Activated CD8-positive, alpha-beta memory T cell treated with anti-CD3 and anti-CD28 coated beads, Interleukin-2, amount 10 ng/mL, durations not matched to agents 7 days and 5 days (primary cell): ENCODE measurements at regions of chr5 and their contacts with region 1.

Region 1: DNA sequence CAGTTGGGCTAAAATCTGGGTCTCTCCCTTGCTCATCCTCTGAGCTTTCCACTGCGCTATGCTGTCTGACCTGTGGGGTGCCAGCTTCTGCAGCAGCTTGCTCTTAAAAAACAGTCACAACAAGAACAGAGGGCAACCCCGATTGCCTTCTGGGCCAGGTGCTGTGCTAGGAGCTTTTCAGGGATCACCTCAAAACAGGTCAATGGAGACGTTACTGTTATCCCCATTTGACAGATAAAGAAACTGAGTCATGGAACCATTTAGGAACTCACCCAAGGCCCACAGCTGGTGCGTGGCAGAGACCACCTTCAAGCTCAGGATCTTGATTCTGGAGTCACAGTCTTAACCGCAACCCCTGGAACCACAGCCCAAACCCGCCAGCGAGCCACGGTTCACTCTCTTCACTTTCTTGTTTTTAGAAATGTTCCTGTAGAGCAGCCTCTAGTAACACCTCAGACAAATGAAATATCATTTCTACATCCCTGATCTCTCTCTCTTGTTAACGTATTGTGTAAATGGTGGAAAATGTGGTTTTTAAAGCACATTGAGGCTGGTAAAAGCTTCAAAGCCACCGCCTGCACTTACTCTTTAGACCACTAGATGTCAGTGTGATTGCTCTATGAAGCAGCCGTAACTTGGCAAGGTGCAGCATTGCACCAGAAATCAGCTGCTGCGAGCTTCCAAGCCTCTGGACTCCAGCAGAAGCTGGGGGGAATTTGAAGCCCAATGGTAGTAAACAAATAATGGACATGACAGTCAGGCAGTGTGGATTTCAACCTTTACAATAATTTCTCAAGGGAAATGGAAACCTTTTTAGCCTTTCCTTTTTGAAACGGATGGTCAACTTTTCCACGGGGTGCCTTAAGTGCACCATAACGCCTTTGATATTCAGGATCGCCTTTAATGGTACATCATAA is 1.7 kb downstream of the FYB1 start:
- DNase-seq: peak; percentile 89
- ATAC-seq: peak; percentile 72
- H3K4me3 Mint-ChIP-seq: peak overlapping the region; percentile 81
- H3K27ac Mint-ChIP-seq: peak overlapping the region; percentile 96
- H3K4me1 Mint-ChIP-seq: peaks cover 64% of the 10 kb centered on the region
- H3K27me3 Mint-ChIP-seq: no peaks in the 10 kb centered on the region

Region 2: DNA sequence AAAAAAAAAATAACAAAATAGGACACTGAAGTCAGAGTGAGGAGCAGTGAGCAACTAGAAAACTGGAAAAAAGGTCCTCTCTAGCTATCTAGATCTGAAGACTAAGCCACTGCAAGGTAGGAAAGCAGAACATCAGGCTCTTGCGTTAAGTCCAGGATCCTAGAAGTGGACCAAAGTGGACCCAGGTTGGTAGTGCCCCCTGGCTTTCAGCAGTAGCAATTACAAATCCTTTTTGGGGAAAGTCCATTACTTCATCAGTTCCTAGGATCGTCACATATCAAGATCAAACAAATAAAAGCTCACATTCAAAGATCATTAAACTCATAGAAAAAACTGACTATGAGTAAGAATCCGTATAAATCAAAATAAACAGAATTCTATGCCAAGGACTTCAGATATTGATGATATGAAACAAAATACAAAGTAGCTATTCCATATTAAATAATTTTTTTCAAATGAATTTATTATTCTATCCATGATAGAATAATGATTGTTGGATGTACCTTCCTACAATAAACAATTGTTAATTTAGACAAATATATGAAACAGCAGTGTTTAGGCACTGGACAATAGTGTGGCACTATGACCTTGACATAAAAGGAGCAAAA is 136.9 kb before region 1 on chr5:
- CTCF ChIA-PET with region 1: interaction called, 10 read pairs
- DNase-seq: peak; percentile 56
- ATAC-seq: peak; percentile 46
- H3K4me3 Mint-ChIP-seq: no peak overlapping the region
- H3K27ac Mint-ChIP-seq: no peak overlapping the region
- H3K4me1 Mint-ChIP-seq: peaks cover 21% of the 10 kb centered on the region
- H3K27me3 Mint-ChIP-seq: peaks cover 24% of the 10 kb centered on the region

Region 3: DNA sequence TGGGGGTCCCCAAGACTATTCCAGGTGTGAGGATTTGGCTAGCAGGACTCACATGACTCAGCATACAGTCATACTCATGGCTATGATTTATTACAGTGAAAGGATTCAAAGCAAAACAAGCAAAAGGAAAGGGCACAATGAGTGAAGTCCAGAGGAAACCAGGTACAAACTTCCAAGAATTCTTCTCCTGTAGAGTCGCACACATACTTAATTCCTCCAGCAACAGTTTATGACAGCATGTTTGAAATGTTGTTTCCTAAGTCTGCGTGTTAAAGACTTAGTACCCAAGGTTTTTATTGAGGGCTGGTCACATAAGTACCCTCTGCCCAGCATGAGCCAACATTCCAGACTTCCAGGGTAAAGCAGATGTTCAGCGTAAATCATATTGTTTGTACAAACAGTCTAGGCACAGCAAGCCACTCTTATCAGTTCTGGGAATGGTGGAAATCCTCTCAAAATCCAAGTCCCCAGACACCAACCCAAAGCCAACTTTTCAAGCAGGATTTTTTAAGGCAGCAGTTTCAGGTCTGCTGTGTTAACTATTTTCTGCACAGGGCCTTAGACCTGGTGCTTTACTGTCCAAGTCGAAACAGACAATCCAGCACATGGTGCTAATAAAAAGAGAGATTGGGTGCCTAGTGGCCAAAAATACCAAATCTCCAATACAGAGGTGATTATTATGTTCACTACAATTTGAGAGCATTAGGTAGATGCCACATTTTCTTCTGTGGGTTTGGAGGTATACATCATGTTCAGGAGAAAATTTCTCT is 124.9 kb before region 1 on chr5:
- CTCF ChIA-PET with region 1: no interaction called
- DNase-seq: no peak
- ATAC-seq: no peak
- H3K4me3 Mint-ChIP-seq: no peak overlapping the region
- H3K27ac Mint-ChIP-seq: no peak overlapping the region
- H3K4me1 Mint-ChIP-seq: no peaks in the 10 kb centered on the region
- H3K27me3 Mint-ChIP-seq: peaks cover 28% of the 10 kb centered on the region

Region 4: GRCh38 chr5:39164529-39165402 is 52.9 kb before region 1 on chr5:
- CTCF ChIA-PET with region 1: interaction called, 15 read pairs
- DNase-seq: peak; percentile 57
- ATAC-seq: peak; percentile 93
- H3K4me3 Mint-ChIP-seq: peak overlapping the region; percentile 48
- H3K27ac Mint-ChIP-seq: peak overlapping the region; percentile 90
- H3K4me1 Mint-ChIP-seq: peaks cover 80% of the 10 kb centered on the region
- H3K27me3 Mint-ChIP-seq: no peaks in the 10 kb centered on the region

Region 5: GRCh38 chr5:39194466-39195136 is 23.0 kb before region 1 on chr5:
- CTCF ChIA-PET with region 1: interaction called, 66 read pairs
- DNase-seq: peak; percentile 55
- ATAC-seq: peak; percentile 16
- H3K4me3 Mint-ChIP-seq: peak overlapping the region; percentile 74
- H3K27ac Mint-ChIP-seq: peak overlapping the region; percentile 79
- H3K4me1 Mint-ChIP-seq: peaks cover 74% of the 10 kb centered on the region
- H3K27me3 Mint-ChIP-seq: no peaks in the 10 kb centered on the region

Region 6: GRCh38 chr5:39231705-39232525 is 14.3 kb after region 1 on chr5:
- CTCF ChIA-PET with region 1: interaction called, 19 read pairs
- DNase-seq: peak; percentile 64
- ATAC-seq: peak; percentile 88
- H3K4me3 Mint-ChIP-seq: no peak overlapping the region
- H3K27ac Mint-ChIP-seq: peak overlapping the region; percentile 84
- H3K4me1 Mint-ChIP-seq: peaks cover 15% of the 10 kb centered on the region
- H3K27me3 Mint-ChIP-seq: no peaks in the 10 kb centered on the region

Region 7: GRCh38 chr5:39264528-39264927 is 46.9 kb after region 1 on chr5:
- CTCF ChIA-PET with region 1: interaction called, 63 read pairs
- DNase-seq: peak; percentile 66
- ATAC-seq: peak; percentile 87
- H3K4me3 Mint-ChIP-seq: peak overlapping the region; percentile 11
- H3K27ac Mint-ChIP-seq: peak overlapping the region; percentile 77
- H3K4me1 Mint-ChIP-seq: peaks cover 36% of the 10 kb centered on the region
- H3K27me3 Mint-ChIP-seq: no peaks in the 10 kb centered on the region

Region 8: DNA sequence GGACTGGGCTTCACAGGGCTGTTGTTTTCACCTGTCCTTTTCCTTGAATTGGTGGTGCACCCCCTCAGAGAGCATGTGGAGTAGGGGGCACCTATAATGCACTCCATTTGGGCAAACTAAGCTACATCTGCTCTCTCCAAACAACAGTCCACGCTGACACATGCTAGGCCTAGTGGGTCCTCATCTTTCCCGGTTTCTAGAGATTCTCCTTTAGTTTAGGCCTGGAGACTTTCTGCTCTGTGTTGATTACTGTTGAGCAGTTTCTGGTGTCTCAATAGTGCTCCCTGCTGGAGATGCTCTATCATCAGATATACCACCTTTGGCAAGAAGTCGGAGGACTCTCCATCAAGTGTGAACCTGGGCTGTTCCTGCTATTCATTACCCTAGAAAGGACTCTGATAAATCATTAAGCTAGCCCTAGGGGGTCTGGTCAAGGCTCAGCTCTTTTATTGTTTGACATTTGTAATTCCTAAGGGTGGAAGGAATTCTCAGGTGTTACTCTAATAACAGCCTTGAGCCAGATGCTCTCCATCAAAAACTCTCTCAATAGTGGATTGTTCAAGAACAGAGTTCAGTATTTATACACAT is 65.7 kb after region 1 on chr5:
- CTCF ChIA-PET with region 1: interaction called, 181 read pairs
- DNase-seq: peak; percentile 71
- ATAC-seq: peak; percentile 100
- H3K4me3 Mint-ChIP-seq: no peak overlapping the region
- H3K27ac Mint-ChIP-seq: no peak overlapping the region
- H3K4me1 Mint-ChIP-seq: peaks cover 16% of the 10 kb centered on the region
- H3K27me3 Mint-ChIP-seq: no peaks in the 10 kb centered on the region

Region 9: GRCh38 chr5:39360471-39361111 is 143.0 kb after region 1 on chr5:
- CTCF ChIA-PET with region 1: no interaction called
- DNase-seq: no peak
- ATAC-seq: no peak
- H3K4me3 Mint-ChIP-seq: no peak overlapping the region
- H3K27ac Mint-ChIP-seq: no peak overlapping the region
- H3K4me1 Mint-ChIP-seq: no peaks in the 10 kb centered on the region
- H3K27me3 Mint-ChIP-seq: peaks cover 3% of the 10 kb centered on the region